ENCODE measurements at regions of chr12 and their contacts with region 1.

Region 1: DNA sequence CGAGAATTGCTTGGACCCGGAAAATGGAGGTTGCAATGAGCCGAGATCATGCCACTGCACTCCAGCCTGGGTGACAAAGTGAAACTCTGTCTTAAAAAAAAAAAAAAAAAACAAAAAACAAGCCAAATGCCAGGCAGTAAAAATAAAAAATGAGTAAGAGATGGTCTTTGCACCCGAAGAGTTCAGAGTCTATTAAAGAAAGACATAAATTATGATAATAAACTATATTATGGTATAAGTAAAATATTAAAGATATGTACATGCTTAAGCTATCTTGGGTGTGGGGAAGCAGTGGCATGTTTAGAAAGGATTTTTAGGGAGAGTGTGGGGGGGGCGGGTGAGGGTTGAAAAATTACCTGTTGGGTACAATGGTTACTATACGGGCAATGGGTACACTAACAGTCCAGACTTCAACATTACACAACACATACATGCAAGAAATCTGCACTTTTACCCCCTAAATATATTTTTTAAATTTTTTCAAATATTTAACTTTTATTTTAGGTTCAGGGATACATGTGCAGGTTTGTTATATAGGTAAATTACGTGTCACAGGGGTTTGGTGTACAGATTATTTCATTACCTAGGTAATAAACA is 99.3 kb downstream of the EEA1 start:
- DNase-seq: no peak
- H3K4me3 ChIP-seq: no peak overlapping the region
- H3K27ac ChIP-seq: no peak overlapping the region
- H3K4me1 ChIP-seq: no peaks in the 10 kb centered on the region
- H3K27me3 ChIP-seq: no peaks in the 10 kb centered on the region
- CTCF ChIP-seq: no peak
- POLR2A ChIP-seq: no peak

Region 2: GRCh38 chr12:92629349-92630065 is 200.3 kb before region 1 on chr12:
- intact Hi-C with region 1: no loop called
- DNase-seq: peak in 5 of 7 donors; percentile 35 to 62 (median 59)
- H3K4me3 ChIP-seq: peak overlapping the region in 1 of 4 donors; percentile 3
- H3K27ac ChIP-seq: no peak overlapping the region
- H3K4me1 ChIP-seq: peaks cover 0 to 5% of the 10 kb centered on the region in 2 donors
- H3K27me3 ChIP-seq: no peaks in the 10 kb centered on the region
- CTCF ChIP-seq: no peak
- POLR2A ChIP-seq: no peak

Region 3: GRCh38 chr12:92929983-92930382 is 100.2 kb after region 1 on chr12:
- intact Hi-C with region 1: loop called in 1 of 2 experiments (anchors 10 kb)
- DNase-seq: no peak
- H3K4me3 ChIP-seq: peak overlapping the region in 3 of 4 donors; percentile 48 to 98 (median 78)
- H3K27ac ChIP-seq: peak overlapping the region; percentile 95 to 99 (median 99)
- H3K4me1 ChIP-seq: peaks cover 18 to 26% of the 10 kb centered on the region in 2 donors
- H3K27me3 ChIP-seq: no peaks in the 10 kb centered on the region
- CTCF ChIP-seq: no peak
- POLR2A ChIP-seq: no peak